H1 (cell line): ENCODE measurements at regions of chr6 and their contacts with region 1.

Region 1: GRCh38 chr6:159238920-159239558 is 69.8 kb downstream of the FNDC1 start:
- DNase-seq: no peak
- H3K4me3 ChIP-seq: no peak overlapping the region
- H3K27ac ChIP-seq: no peak overlapping the region
- H3K4me1 ChIP-seq: no peaks in the 10 kb centered on the region
- H3K27me3 ChIP-seq: peaks cover 0 to 14% (median 10%) of the 10 kb centered on the region in 4 experiments; a peak in 6 of 7 replicates
- CTCF ChIP-seq: no peak
- EP300 ChIP-seq: no peak
- POLR2A ChIP-seq: no peak
- RAD21 ChIP-seq: no peak

Region 2: DNA sequence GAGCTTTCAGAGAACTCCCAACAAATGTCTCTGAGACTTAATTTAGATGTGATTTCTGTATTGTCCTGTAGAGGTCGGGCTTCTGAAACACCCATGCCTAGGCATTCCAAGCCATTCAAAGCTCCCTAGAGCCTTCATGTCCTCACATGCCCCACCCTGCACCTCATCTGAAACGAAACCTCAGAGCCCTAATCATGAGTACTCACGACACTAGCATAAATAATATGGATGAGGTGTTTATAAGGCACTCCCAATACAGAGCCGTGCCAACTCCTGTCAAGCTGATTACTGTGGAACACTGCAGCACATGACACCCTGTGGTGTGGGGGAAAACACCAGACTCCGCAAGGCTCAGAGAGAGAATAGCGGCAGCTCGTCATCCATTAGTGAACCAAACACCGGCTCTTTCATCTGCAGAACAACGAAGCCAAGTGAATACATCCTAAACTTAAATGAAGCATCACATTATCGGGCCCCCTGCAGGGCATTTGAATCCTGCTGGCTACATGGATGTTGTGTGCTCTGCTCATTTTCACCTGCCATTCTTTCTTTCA is 14.0 kb after region 1 on chr6:
- CTCF ChIA-PET with region 1: interaction called, 19 read pairs
- POLR2A ChIA-PET with region 1: no interaction called
- DNase-seq: peak; percentile 21 to 54
- H3K4me3 ChIP-seq: no peak overlapping the region
- H3K27ac ChIP-seq: no peak overlapping the region
- H3K4me1 ChIP-seq: peaks cover 0 to 4% (median 2%) of the 10 kb centered on the region in 4 experiments; a peak in 3 of 7 replicates
- H3K27me3 ChIP-seq: no peaks in the 10 kb centered on the region
- CTCF ChIP-seq: peak; percentile 8 to 68 (median 46)
- EP300 ChIP-seq: no peak
- POLR2A ChIP-seq: no peak
- RAD21 ChIP-seq: peak; percentile 36 to 39; a peak in 3 of 4 replicates